ENCODE measurements at regions of chr5 and their contacts with region 1.

Region 1: GRCh38 chr5:87010736-87011135 is 256.9 kb upstream of the RASA1 start:
- DNase-seq: no peak
- H3K4me3 ChIP-seq: no peak overlapping the region
- CTCF ChIP-seq: no peak

Region 2: DNA sequence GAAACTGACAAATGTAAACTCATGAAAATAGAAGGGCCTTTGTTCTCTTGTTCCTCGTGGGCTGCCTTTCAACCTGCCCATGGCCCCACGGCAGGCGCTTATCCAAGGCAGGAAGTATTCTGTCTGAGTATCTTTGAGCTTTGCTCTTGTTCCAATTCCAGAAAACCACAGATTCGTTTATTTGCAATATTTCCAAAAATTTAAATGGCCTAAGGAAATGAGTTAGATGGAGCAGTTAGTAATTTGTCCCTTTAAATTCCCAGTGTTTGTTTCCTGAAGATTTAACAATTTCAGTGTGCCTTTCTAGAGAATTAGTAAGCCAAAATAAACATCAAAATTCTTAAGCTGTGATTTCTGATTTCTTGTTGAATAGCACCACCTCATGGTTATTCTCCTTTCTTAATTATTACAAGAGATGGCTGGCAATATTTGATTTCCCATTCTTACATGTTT is 42.4 kb before region 1 on chr5:
- CTCF ChIA-PET with region 1: interaction called, 20 read pairs
- POLR2A ChIA-PET with region 1: no interaction called
- DNase-seq: peak; percentile 9
- H3K4me3 ChIP-seq: no peak overlapping the region
- CTCF ChIP-seq: no peak

Region 3: GRCh38 chr5:87393331-87393730 is 382.6 kb after region 1 on chr5:
- CTCF ChIA-PET with region 1: no interaction called
- POLR2A ChIA-PET with region 1: no interaction called
- DNase-seq: peak; percentile 60
- H3K4me3 ChIP-seq: no peak overlapping the region
- CTCF ChIP-seq: no peak

Measured in AG04449 (cell line).